HepG2 (cell line): ENCODE measurements at regions of chr7 and their contacts with region 1.

Region 1: GRCh38 chr7:148262721-148263229 is 327.8 kb upstream of the C7orf33 start:
- DNase-seq: peak; percentile 17
- ATAC-seq: peak; percentile 94
- H3K4me3 ChIP-seq: peak overlapping the region in 1 of 3 experiments; percentile 51; a peak in 2 of 6 replicates
- H3K27ac ChIP-seq: no peak overlapping the region
- H3K4me1 ChIP-seq: no peaks in the 10 kb centered on the region
- H3K27me3 ChIP-seq: peaks cover 0 to 13% of the 10 kb centered on the region in 2 experiments; a peak in 1 of 5 replicates
- CTCF ChIP-seq: peak; percentile 92
- EP300 ChIP-seq: no peak
- POLR2A ChIP-seq: no peak
- RAD21 ChIP-seq: peak; percentile 59

Region 2: GRCh38 chr7:148185041-148185440 is 77.7 kb before region 1 on chr7:
- CTCF ChIA-PET with region 1: no interaction called
- POLR2A ChIA-PET with region 1: no interaction called
- in situ Hi-C with region 1: no loop called
- intact Hi-C with region 1: no loop called
- DNase-seq: no peak
- ATAC-seq: no peak
- H3K4me3 ChIP-seq: no peak overlapping the region
- H3K27ac ChIP-seq: no peak overlapping the region
- H3K4me1 ChIP-seq: no peaks in the 10 kb centered on the region
- H3K27me3 ChIP-seq: 0 out of 5 replicates have a peak, but pooled peaks cover 0 to 5% of the 10 kb centered on the region in 2 experiments
- CTCF ChIP-seq: no peak
- EP300 ChIP-seq: no peak
- POLR2A ChIP-seq: no peak
- RAD21 ChIP-seq: no peak

Region 3: DNA sequence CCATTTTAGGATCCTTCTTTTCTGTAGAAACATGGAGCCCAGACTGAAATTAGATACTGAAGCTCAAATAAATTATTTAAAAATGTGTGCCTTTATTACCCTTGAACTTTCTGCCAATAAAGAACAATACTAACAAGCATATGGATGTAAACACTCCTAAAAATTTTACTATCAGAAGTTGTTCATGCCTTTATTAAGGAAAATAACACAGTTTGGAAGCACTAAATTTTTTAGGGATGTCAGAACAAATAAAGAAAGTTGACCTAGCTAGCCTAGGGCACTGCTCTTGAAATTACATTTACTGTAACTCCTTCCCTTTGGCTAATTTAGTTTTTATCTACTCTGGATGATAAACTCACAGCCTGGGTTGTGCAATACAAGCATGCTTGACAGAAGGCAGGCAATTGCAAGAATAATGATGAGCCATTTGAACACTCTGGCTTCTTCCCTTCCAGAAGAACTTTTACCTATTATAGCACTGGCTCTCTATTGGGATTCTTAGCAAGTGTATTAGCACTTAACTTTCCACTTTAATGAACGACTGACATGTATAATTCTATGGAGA is 23.9 kb before region 1 on chr7:
- CTCF ChIA-PET with region 1: no interaction called
- POLR2A ChIA-PET with region 1: no interaction called
- in situ Hi-C with region 1: no loop called
- intact Hi-C with region 1: no loop called
- DNase-seq: no peak
- ATAC-seq: no peak
- H3K4me3 ChIP-seq: no peak overlapping the region
- H3K27ac ChIP-seq: no peak overlapping the region
- H3K4me1 ChIP-seq: no peaks in the 10 kb centered on the region
- H3K27me3 ChIP-seq: no peaks in the 10 kb centered on the region
- CTCF ChIP-seq: no peak
- EP300 ChIP-seq: no peak
- POLR2A ChIP-seq: no peak
- RAD21 ChIP-seq: no peak

Region 4: DNA sequence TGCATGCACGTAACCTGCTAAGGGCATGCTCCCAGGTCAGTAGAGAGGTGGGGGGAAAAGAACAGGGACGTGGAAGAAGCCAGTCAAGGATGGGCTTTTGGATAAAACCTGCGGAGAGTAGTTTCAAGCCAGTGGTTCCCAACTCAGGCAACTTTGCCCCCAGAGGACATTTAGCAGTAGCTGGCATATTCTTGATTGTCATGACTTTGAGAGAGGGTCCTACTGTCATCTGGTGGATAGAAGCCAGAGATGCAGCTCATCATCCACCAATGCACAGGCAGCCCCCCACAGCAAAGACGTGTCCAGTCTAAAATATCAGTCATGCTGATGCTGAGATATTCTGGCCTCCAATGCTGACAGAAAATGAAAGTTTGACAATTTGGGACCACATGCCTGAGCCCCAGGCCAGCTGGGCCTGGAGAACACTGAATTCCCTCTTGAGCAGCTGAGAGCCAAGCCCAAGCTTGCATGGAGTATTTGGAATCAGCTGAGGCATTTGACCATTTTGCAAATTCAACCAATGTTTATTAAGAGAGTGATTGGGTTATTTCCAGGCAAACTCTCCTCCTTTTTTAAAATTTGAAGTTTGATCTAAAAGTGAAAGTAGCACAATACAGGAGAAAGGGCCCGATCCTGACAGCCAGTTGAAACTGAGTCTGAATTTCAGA is 217.8 kb after region 1 on chr7:
- CTCF ChIA-PET with region 1: no interaction called
- POLR2A ChIA-PET with region 1: no interaction called
- in situ Hi-C with region 1: loop called (anchors 10 kb)
- intact Hi-C with region 1: loop called (anchors 1 kb)
- DNase-seq: no peak
- ATAC-seq: peak; percentile 74
- H3K4me3 ChIP-seq: no peak overlapping the region
- H3K27ac ChIP-seq: no peak overlapping the region
- H3K4me1 ChIP-seq: peaks cover 46% of the 10 kb centered on the region
- H3K27me3 ChIP-seq: peaks cover 0 to 6% of the 10 kb centered on the region in 2 experiments; a peak in 1 of 5 replicates
- CTCF ChIP-seq: peak; percentile 59
- EP300 ChIP-seq: no peak
- POLR2A ChIP-seq: no peak
- RAD21 ChIP-seq: 0 out of 2 replicates have a peak, but pooled peaks have one; percentile 30

Region 5: GRCh38 chr7:148485618-148486017 is 222.8 kb after region 1 on chr7:
- CTCF ChIA-PET with region 1: no interaction called
- POLR2A ChIA-PET with region 1: no interaction called
- in situ Hi-C with region 1: loop called (anchors 10 kb)
- intact Hi-C with region 1: loop called (anchors 1 kb)
- DNase-seq: no peak
- ATAC-seq: peak; percentile 34; the same call in 1 of the 3 replicates
- H3K4me3 ChIP-seq: no peak overlapping the region
- H3K27ac ChIP-seq: no peak overlapping the region
- H3K4me1 ChIP-seq: peaks cover 14% of the 10 kb centered on the region
- H3K27me3 ChIP-seq: peaks cover 2 to 6% of the 10 kb centered on the region in 2 experiments; a peak in 2 of 5 replicates
- CTCF ChIP-seq: peak; percentile 50
- EP300 ChIP-seq: no peak
- POLR2A ChIP-seq: no peak
- RAD21 ChIP-seq: no peak

Region 6: DNA sequence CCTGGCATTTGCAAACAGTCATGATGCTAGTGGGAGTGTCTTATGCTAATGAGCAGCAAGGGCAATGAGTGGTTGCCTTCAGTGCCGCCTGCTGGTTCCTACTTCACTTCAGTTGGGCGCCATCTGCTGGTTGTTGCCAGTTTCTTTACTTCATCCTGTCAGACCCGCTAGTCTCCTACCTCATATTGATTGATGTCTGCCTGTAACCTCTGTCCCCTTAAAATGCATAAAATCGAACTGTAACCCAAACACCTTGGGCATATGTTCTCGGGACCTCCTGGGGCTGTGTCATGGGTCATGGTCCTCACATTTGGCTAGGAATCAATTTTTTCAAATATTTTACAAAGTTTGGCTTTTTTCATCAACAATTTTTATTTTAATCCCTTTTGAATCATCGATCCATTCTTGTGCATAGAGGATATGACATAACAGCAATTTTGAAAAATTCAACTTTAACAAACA is 265.0 kb after region 1 on chr7:
- CTCF ChIA-PET with region 1: interaction called, 6 read pairs
- POLR2A ChIA-PET with region 1: no interaction called
- in situ Hi-C with region 1: no loop called
- intact Hi-C with region 1: loop called (anchors 1 kb)
- DNase-seq: peak; percentile 88
- ATAC-seq: peak; percentile 97
- H3K4me3 ChIP-seq: peak overlapping the region in 1 of 3 experiments; percentile 46; a peak in 1 of 6 replicates
- H3K27ac ChIP-seq: no peak overlapping the region
- H3K4me1 ChIP-seq: peaks cover 31% of the 10 kb centered on the region
- H3K27me3 ChIP-seq: 0 out of 5 replicates have a peak, but pooled peaks cover 0 to 5% of the 10 kb centered on the region in 2 experiments
- CTCF ChIP-seq: peak; percentile 86
- EP300 ChIP-seq: no peak
- POLR2A ChIP-seq: no peak
- RAD21 ChIP-seq: peak; percentile 72